ENCODE measurements at regions of chr20 and their contacts with region 1.

Region 1: GRCh38 chr20:57346477-57346876 is 4.6 kb upstream of the RAE1 start:
- DNase-seq: peak; percentile 60 to 79 (median 70)
- H3K4me3 ChIP-seq: no peak overlapping the region
- H3K27ac ChIP-seq: no peak overlapping the region
- H3K4me1 ChIP-seq: peaks cover 0 to 8% (median 2%) of the 10 kb centered on the region in 4 experiments
- H3K27me3 ChIP-seq: peaks cover 3 to 19% (median 17%) of the 10 kb centered on the region in 5 experiments

Region 2: GRCh38 chr20:57089691-57090150 is 256.8 kb before region 1 on chr20:
- CTCF ChIA-PET with region 1: interaction called, 72 read pairs
- POLR2A ChIA-PET with region 1: no interaction called
- DNase-seq: peak; percentile 47 to 59 (median 55)
- H3K4me3 ChIP-seq: no peak overlapping the region
- H3K27ac ChIP-seq: no peak overlapping the region
- H3K4me1 ChIP-seq: peaks cover 0 to 3% (median 0%) of the 10 kb centered on the region in 4 experiments
- H3K27me3 ChIP-seq: peaks cover 0 to 27% (median 6%) of the 10 kb centered on the region in 5 experiments

Region 3: DNA sequence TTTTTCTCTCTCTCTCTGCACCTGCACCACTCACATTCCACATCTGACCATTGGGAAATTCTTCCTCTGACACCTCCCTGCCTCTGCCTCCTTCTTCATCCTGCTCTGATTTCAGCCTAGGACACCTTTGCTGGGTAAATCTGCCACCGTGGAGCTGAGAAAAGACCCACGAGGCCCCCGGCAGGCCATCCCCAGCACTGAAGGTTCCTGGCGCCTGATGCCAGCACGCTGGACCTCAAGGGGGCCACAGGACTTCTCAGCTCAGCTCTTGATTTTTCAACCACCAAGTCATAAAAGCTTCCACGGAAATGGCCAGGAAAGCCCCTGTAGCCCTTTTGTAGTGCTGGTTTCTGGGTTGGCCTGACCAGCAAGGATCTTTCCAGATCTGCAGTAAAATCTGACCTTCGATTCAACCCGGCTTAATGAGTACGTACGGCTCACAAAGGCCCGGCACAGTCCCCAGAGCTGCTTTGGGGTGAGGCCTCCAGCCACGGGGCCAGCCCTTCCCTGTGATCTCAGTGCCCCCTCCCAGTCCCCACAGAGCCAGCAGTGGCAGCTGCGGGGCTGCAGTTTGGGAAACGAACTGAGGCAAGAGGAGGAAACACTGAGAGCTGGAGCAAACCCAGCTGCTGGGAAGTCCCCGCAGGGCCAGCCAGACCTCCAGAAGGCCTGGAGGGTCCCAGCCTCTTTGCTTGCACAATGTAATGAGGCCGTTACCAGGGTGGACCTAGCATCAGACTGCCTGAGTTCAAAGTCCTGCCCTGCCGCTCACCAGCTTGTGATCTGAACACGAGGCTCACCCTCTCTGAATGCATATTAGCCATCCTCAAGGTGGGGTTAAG is 237.5 kb before region 1 on chr20:
- CTCF ChIA-PET with region 1: no interaction called
- POLR2A ChIA-PET with region 1: no interaction called
- DNase-seq: no peak
- H3K4me3 ChIP-seq: no peak overlapping the region
- H3K27ac ChIP-seq: no peak overlapping the region
- H3K4me1 ChIP-seq: no peaks in the 10 kb centered on the region
- H3K27me3 ChIP-seq: peaks cover 0 to 29% (median 1%) of the 10 kb centered on the region in 5 experiments

Region 4: DNA sequence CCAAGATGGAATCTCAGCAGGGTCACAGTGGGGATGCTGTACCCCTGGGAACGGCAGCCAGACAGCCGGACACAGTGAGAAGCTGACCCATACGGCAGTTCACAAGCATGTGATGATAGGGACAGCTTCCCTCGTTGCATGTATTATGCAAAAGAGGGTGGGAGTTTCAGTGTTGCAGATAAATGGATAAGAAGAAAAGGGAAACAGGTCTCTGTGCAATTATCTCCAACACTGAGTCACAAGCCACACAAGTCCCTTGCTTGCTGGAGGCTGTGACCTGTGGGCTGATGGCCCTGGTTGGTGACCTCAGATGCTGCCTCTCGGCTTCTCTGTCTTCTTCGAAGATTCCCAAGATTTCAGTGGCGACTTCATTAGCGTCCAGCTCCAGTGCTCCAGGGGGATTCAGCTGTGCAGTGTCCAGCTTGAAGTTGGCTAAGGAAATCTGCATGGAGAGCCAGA is 37.6 kb before region 1 on chr20:
- CTCF ChIA-PET with region 1: no interaction called
- POLR2A ChIA-PET with region 1: no interaction called
- DNase-seq: no peak
- H3K4me3 ChIP-seq: no peak overlapping the region
- H3K27ac ChIP-seq: no peak overlapping the region
- H3K4me1 ChIP-seq: no peaks in the 10 kb centered on the region
- H3K27me3 ChIP-seq: peaks cover 4 to 61% (median 16%) of the 10 kb centered on the region in 5 experiments

Region 5: GRCh38 chr20:57329608-57330221 is 16.8 kb before region 1 on chr20 and contains the start of gene SPO11:
- CTCF ChIA-PET with region 1: interaction called, 10 read pairs
- POLR2A ChIA-PET with region 1: no interaction called
- DNase-seq: no peak
- H3K4me3 ChIP-seq: no peak within 1 kb of the TSS
- H3K27ac ChIP-seq: no peak within 1 kb of the TSS
- H3K4me1 ChIP-seq: no peaks in the 10 kb centered on the region
- H3K27me3 ChIP-seq: peaks cover 16 to 83% (median 46%) of the 10 kb centered on the region in 5 experiments

Region 6: GRCh38 chr20:57374931-57375651 is 28.6 kb after region 1 on chr20:
- CTCF ChIA-PET with region 1: no interaction called
- POLR2A ChIA-PET with region 1: no interaction called
- DNase-seq: no peak
- H3K4me3 ChIP-seq: peak overlapping the region in 1 of 7 experiments; percentile 3
- H3K27ac ChIP-seq: peak overlapping the region in 1 of 2 experiments; percentile 8
- H3K4me1 ChIP-seq: peaks cover 0 to 11% (median 0%) of the 10 kb centered on the region in 4 experiments
- H3K27me3 ChIP-seq: no peaks in the 10 kb centered on the region

Region 7: GRCh38 chr20:57596998-57597939 is 250.8 kb after region 1 on chr20:
- CTCF ChIA-PET with region 1: no interaction called
- POLR2A ChIA-PET with region 1: no interaction called
- DNase-seq: peak; percentile 59 to 75 (median 74)
- H3K4me3 ChIP-seq: peak overlapping the region in 2 of 7 experiments; percentile 11 to 60
- H3K27ac ChIP-seq: no peak overlapping the region
- H3K4me1 ChIP-seq: peaks cover 0 to 4% (median 0%) of the 10 kb centered on the region in 4 experiments
- H3K27me3 ChIP-seq: peaks cover 0 to 8% (median 0%) of the 10 kb centered on the region in 5 experiments